ENCODE measurements at regions of chr5 and their contacts with region 1.

Region 1: DNA sequence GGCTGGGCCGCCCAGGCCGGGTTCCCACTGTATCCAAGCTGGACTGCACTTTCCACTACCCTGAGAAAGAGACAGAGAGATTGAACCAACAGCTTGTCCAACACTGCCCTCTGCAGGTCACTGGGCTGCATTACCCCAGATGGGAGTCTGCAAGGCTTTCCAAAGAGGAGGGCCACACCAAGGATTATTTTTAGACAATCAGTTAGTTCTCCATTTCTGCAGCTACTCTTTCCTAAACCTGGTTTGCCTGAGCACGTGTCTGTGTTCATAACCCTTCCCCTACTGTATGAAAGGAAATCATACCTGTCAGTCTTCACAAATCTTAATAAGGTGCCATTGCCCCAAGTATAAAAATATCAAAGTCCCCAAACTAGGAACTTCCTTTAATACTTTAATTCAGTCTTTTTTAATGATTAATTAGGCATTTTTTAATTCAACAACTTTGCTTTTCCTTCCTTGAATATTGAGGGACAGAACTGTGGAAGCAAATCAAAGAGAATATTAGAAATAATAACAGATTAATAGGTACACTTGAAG is 13.4 kb upstream of the FGF1 start:
- DNase-seq: peak; percentile 90
- H3K4me3 Mint-ChIP-seq: no peak overlapping the region
- H3K27ac Mint-ChIP-seq: no peak overlapping the region
- H3K4me1 Mint-ChIP-seq: peaks cover 2% of the 10 kb centered on the region
- H3K27me3 Mint-ChIP-seq: no peaks in the 10 kb centered on the region

Region 2: DNA sequence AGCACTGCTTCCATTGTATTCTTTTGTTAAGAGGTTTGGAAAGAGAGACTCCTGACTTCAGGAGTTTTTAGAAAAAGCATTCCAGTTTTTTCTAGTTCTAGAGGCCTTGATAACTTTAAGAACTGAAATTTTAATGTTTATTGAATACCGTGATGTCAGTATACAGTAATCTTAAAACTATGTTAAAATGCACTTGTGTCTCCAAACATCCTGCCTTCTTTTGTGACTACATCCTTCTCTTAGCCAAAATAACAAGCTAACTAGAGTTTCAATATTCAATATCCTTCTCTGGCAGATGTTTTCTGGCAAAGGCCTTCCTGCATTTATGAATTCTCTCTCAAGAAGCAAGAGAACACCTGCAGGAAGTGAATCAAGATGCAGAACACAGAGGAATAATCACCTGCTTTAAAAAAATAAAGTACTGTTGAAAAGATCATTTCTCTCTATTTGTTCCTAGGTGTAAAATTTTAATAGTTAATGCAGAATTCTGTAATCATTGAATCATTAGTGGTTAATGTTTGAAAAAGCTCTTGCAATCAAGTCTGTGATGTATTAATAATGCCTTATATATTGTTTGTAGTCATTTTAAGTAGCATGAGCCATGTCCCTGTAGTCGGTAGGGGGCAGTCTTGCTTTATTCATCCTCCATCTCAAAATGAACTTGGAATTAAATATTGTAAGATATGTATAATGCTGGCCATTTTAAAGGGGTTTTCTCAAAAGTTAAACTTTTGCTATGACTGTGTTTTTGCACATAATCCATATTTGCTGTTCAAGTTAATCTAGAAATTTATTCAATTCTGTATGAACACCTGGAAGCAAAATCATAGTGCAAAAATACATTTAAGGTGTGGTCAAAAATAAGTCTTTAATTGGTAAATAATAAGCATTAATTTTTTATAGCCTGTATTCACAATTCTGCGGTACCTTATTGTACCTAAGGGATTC is 547.5 kb before region 1 on chr5:
- CTCF ChIA-PET with region 1: no interaction called
- intact Hi-C with region 1: loop called (anchors 1 kb)
- DNase-seq: peak; percentile 76
- H3K4me3 Mint-ChIP-seq: no peak overlapping the region
- H3K27ac Mint-ChIP-seq: no peak overlapping the region
- H3K4me1 Mint-ChIP-seq: peaks cover 15% of the 10 kb centered on the region
- H3K27me3 Mint-ChIP-seq: no peaks in the 10 kb centered on the region

Region 3: DNA sequence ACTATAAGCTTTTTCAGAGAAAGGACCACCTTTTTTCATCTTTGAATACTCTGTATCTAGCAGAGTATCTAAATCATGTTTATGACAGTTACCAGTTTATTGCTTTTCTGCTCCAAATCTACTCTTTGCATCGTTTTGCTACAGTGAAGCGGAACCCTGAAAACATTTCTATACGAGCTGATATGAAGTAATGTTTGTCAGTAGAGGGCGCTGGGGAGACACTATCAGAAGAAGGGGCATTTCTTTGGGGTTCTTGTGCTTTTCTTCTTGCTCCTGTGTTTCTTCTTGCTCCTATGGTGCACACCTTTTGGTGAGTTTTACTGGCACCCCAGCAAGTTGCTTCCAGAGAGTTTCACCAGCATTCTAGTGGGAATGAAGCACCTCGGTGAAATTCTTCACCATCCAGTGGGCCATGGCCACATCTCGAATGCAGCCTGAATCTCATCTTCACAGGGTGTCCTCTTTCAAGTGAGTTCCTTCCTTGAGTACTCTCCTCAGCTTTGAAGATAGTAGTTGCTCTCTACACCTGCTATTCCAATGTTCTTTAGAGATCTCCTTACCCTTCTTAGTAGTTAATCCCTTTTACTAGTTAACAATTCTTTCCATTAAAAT is 111.8 kb before region 1 on chr5:
- CTCF ChIA-PET with region 1: interaction called, 4 read pairs
- intact Hi-C with region 1: loop called (anchors 10 kb)
- DNase-seq: peak; percentile 62
- H3K4me3 Mint-ChIP-seq: no peak overlapping the region
- H3K27ac Mint-ChIP-seq: no peak overlapping the region
- H3K4me1 Mint-ChIP-seq: peaks cover 5% of the 10 kb centered on the region
- H3K27me3 Mint-ChIP-seq: no peaks in the 10 kb centered on the region

Region 4: DNA sequence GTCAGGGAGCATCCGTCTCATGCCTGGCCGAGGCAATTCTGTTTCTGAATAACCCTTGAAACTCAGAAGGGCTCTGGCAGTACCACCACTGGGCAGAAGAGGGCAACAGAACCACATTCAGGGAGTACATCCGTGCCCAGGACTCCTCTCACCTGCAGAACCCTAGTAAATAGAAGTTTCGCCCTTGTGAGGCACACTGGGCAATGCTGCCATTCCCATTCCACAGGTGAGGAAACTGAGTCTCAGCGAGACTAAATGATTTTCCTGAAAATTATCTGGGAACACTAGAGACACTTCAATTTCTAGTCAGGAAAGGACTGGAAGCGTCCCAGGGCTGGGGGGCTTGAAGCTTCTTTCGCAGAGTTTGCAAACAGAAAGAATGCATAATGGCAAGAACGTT is 88.1 kb before region 1 on chr5:
- CTCF ChIA-PET with region 1: interaction called, 33 read pairs
- intact Hi-C with region 1: loop called (anchors 1 kb)
- DNase-seq: peak; percentile 88
- H3K4me3 Mint-ChIP-seq: no peak overlapping the region
- H3K27ac Mint-ChIP-seq: no peak overlapping the region
- H3K4me1 Mint-ChIP-seq: no peaks in the 10 kb centered on the region
- H3K27me3 Mint-ChIP-seq: peaks cover 5% of the 10 kb centered on the region

Region 5: GRCh38 chr5:142655339-142656267 is 43.6 kb before region 1 on chr5:
- CTCF ChIA-PET with region 1: interaction called, 59 read pairs
- intact Hi-C with region 1: loop called (anchors 1 kb)
- DNase-seq: peak; percentile 77
- H3K4me3 Mint-ChIP-seq: no peak overlapping the region
- H3K27ac Mint-ChIP-seq: no peak overlapping the region
- H3K4me1 Mint-ChIP-seq: no peaks in the 10 kb centered on the region
- H3K27me3 Mint-ChIP-seq: peaks cover 5% of the 10 kb centered on the region

Region 6: DNA sequence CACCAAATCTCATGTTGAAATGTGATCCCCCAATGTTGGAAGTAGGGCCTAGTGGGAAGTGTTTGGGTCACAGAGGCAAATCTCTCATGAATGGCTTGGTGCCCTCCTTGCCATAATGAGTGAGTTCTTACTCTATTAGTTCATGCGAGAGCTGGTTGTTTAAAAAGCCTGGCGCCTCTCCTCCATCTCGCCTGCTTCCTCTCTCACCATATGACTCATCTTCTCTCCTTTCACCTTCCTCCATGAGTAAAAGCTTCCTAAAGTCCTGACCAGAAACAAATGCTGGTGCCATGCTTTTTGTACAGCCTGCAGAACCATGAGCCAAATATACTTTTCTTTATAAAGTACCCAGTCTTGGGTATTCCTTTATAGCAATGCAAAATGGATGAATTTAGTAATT is 50.1 kb after region 1 on chr5:
- CTCF ChIA-PET with region 1: no interaction called
- intact Hi-C with region 1: no loop called
- DNase-seq: peak; percentile 45
- H3K4me3 Mint-ChIP-seq: no peak overlapping the region
- H3K27ac Mint-ChIP-seq: no peak overlapping the region
- H3K4me1 Mint-ChIP-seq: peaks cover 13% of the 10 kb centered on the region
- H3K27me3 Mint-ChIP-seq: no peaks in the 10 kb centered on the region

Region 7: DNA sequence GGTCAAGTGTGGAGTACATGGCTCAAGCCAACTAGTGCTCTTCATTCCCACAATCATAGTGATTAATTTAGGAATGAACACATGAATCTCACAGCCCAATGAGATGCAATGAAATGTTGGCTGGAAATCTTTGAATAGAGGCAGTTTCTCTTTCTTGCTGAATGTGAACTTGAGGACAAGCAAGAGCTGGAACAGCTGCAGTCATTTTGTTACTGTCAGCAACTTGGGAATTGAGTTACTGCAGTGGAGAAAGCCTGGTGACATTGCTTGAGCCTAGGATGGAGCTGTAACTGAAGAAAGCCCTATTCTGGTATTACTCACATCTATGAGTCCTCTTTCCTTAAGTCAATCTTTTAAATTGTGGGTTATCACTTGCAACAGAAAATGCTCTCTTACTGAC is 1408.9 kb after region 1 on chr5:
- CTCF ChIA-PET with region 1: no interaction called
- intact Hi-C with region 1: no loop called
- DNase-seq: no peak
- H3K4me3 Mint-ChIP-seq: no peak overlapping the region
- H3K27ac Mint-ChIP-seq: no peak overlapping the region
- H3K4me1 Mint-ChIP-seq: no peaks in the 10 kb centered on the region
- H3K27me3 Mint-ChIP-seq: peaks cover 4% of the 10 kb centered on the region

Region 8: GRCh38 chr5:144671066-144671465 is 1971.8 kb after region 1 on chr5:
- CTCF ChIA-PET with region 1: no interaction called
- intact Hi-C with region 1: no loop called
- DNase-seq: no peak
- H3K4me3 Mint-ChIP-seq: no peak overlapping the region
- H3K27ac Mint-ChIP-seq: no peak overlapping the region
- H3K4me1 Mint-ChIP-seq: no peaks in the 10 kb centered on the region
- H3K27me3 Mint-ChIP-seq: no peaks in the 10 kb centered on the region

Measured in activated naive CD4-positive, alpha-beta T cell treated with anti-CD3 and anti-CD28 coated beads for 36 hours (primary cell).